ENCODE measurements at regions of chr4 and their contacts with region 1.

Region 1: DNA sequence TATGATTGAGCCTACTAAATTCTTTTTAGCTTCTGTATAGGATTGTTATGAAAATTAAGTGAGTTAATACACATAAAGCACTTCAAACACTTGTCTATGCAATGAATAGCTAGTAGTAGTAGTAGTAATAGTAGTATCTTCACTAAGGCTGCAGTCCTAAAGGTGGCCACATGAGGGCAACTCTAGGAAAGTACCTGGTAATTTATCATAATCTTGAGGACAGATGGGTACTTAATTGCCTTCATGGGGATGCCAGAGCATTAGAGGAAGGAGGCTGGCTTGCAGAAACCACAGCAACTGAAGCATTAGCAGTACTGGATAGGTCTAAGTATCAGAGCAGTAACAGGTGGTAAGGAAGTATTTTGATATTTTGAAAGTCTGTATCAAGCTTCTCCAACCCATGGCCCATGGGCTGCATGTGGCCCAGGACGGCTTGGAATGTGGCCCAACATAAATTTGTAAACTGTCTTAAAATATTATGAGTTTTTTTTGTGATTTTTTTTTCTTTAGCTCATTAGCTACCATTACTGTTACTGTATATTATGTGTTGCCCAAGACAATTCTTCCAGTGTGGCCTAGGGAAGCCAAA is 17.3 kb downstream of the NIPAL1 start:
- DNase-seq: peak; percentile 49 to 67 (median 58)
- H3K4me3 ChIP-seq: no peak overlapping the region
- H3K4me3 Mint-ChIP-seq: no peak overlapping the region
- H3K27ac ChIP-seq: no peak overlapping the region
- H3K27ac Mint-ChIP-seq: no peak overlapping the region
- H3K4me1 ChIP-seq: no peaks in the 10 kb centered on the region
- H3K4me1 Mint-ChIP-seq: peaks cover 2 to 12% (median 3%) of the 10 kb centered on the region in 4 donors
- H3K27me3 ChIP-seq: no peaks in the 10 kb centered on the region
- H3K27me3 Mint-ChIP-seq: no peaks in the 10 kb centered on the region

Region 2: GRCh38 chr4:48016141-48017103 is 17.5 kb before region 1 on chr4 and contains the starts of genes CNGA1 and NIPAL1:
- CTCF ChIA-PET with region 1: interaction called, 41 read pairs
- POLR2A ChIA-PET with region 1: no interaction called
- intact Hi-C with region 1: no loop called
- DNase-seq: peak; percentile 63 to 71 (median 68)
- H3K4me3 ChIP-seq: peak within 1 kb of the TSS; percentile 50 to 57
- H3K4me3 Mint-ChIP-seq: peak within 1 kb of the TSS; percentile 77 to 92 (median 87)
- H3K27ac ChIP-seq: no peak within 1 kb of the TSS
- H3K27ac Mint-ChIP-seq: peak within 1 kb of the TSS in 4 of 7 donors; percentile 6 to 75 (median 40)
- H3K4me1 ChIP-seq: peaks cover 16% of the 10 kb centered on the region
- H3K4me1 Mint-ChIP-seq: peaks cover 4 to 12% (median 9%) of the 10 kb centered on the region in 4 donors
- H3K27me3 ChIP-seq: no peaks in the 10 kb centered on the region
- H3K27me3 Mint-ChIP-seq: peaks cover 8 to 16% of the 10 kb centered on the region in 2 donors
- total RNA-seq, gene CNGA1: not detected
- total RNA-seq, gene NIPAL1: 3.0 to 3.3 TPM

Region 3: DNA sequence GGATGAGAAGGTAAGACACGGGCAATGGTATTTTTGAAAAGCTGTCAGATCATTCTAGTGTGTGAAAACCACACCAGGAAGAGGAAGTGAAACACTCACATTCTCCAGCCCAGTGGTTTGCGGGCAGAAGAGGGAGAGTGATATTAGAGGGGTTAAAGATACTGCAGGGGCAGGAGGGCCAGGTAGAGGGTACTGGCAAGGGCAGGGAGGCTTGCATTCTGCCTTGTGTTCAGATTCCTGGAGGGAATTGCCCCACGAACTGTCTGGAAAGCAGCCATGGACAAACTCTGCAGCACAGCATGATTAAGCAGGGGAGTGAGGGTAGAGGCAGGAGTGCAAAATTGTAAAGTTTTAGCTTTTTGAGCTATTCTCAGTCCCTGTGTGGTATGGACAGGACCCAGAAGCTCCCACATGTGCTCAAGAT is 13.5 kb after region 1 on chr4:
- CTCF ChIA-PET with region 1: interaction called, 140 read pairs
- POLR2A ChIA-PET with region 1: interaction called, 8 read pairs
- intact Hi-C with region 1: loop called (anchors 1 kb)
- DNase-seq: peak; percentile 40 to 67 (median 51)
- H3K4me3 ChIP-seq: no peak overlapping the region
- H3K4me3 Mint-ChIP-seq: peak overlapping the region in 7 of 8 donors; percentile 46 to 90 (median 77)
- H3K27ac ChIP-seq: no peak overlapping the region
- H3K27ac Mint-ChIP-seq: peak overlapping the region in 4 of 7 donors; percentile 0 to 52 (median 22)
- H3K4me1 ChIP-seq: peaks cover 57% of the 10 kb centered on the region
- H3K4me1 Mint-ChIP-seq: peaks cover 37 to 68% (median 52%) of the 10 kb centered on the region in 4 donors
- H3K27me3 ChIP-seq: no peaks in the 10 kb centered on the region
- H3K27me3 Mint-ChIP-seq: peaks cover 4 to 10% of the 10 kb centered on the region in 2 donors

Region 4: GRCh38 chr4:48058284-48058962 is 24.5 kb after region 1 on chr4:
- CTCF ChIA-PET with region 1: no interaction called
- POLR2A ChIA-PET with region 1: no interaction called
- intact Hi-C with region 1: no loop called
- DNase-seq: peak in 3 of 5 donors; percentile 16 to 35 (median 33)
- H3K4me3 ChIP-seq: no peak overlapping the region
- H3K4me3 Mint-ChIP-seq: no peak overlapping the region
- H3K27ac ChIP-seq: no peak overlapping the region
- H3K27ac Mint-ChIP-seq: peak overlapping the region in 2 of 7 donors; percentile 60 to 85
- H3K4me1 ChIP-seq: no peaks in the 10 kb centered on the region
- H3K4me1 Mint-ChIP-seq: peaks cover 11 to 24% (median 13%) of the 10 kb centered on the region in 4 donors
- H3K27me3 ChIP-seq: no peaks in the 10 kb centered on the region
- H3K27me3 Mint-ChIP-seq: no peaks in the 10 kb centered on the region

Region 5: GRCh38 chr4:48109413-48110263 is 75.7 kb after region 1 on chr4:
- CTCF ChIA-PET with region 1: interaction called, 20 read pairs
- POLR2A ChIA-PET with region 1: interaction called, 3 read pairs
- intact Hi-C with region 1: no loop called
- DNase-seq: peak in 4 of 5 donors; percentile 42 to 50 (median 48)
- H3K4me3 ChIP-seq: no peak overlapping the region
- H3K4me3 Mint-ChIP-seq: no peak overlapping the region
- H3K27ac ChIP-seq: no peak overlapping the region
- H3K27ac Mint-ChIP-seq: peak overlapping the region in 3 of 7 donors; percentile 7 to 52 (median 11)
- H3K4me1 ChIP-seq: peaks cover 38% of the 10 kb centered on the region
- H3K4me1 Mint-ChIP-seq: peaks cover 25 to 35% (median 31%) of the 10 kb centered on the region in 4 donors
- H3K27me3 ChIP-seq: no peaks in the 10 kb centered on the region
- H3K27me3 Mint-ChIP-seq: no peaks in the 10 kb centered on the region